Dendritic cell treated with granulocyte-macrophage colony-stimulating factor and Interleukin-4, amounts not matched to agents 40 ng/mL and 50 ng/mL, for 4 days (primary cell): ENCODE measurements at regions of chr3 and their contacts with region 1.

Region 1: DNA sequence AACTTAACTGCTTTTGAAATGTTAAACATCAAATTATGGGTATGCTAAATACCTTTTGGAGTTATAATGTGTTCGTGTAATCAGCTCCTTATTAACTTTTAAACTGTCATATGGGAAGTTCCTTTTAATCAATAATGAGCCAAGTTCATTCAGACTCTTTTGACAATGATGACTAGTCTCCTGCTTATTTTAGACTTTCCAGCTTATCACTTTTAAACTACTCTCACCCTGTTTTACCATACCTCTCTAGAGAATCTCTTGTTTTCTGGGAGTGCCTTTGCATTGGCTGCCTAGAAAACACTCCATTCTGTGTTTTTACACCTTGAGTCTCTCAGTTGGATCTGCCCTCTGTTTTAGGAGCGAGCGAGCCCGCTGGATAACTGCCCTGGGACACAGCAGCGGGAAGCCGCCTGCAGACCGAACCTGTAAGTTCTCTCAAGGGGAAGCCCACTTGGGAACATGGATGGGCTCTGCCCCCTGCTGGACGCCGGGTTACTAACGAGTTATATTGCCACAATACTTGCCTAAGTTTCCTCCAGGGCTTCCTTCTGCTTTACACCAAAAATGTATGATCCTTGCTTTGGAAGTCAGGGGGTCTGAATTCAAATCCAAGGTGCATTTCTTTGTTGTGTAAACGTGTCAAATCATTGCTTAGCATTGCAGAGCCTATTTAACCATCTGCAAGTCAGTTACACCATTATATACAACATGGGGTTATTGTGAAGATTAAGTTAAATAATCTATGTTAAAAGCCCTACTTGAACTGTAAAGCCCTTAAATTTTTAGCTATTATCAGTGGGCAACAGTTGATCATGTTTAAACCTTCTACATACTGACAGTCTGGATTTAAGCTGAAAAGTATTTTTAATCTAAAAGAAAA is 71.3 kb downstream of the DHX36 start:
- H3K4me3 Mint-ChIP-seq: no peak overlapping the region
- H3K27ac Mint-ChIP-seq: no peak overlapping the region
- H3K4me1 Mint-ChIP-seq: peaks cover 5% of the 10 kb centered on the region
- H3K27me3 Mint-ChIP-seq: no peaks in the 10 kb centered on the region

Region 2: GRCh38 chr3:154040286-154040685 is 212.7 kb before region 1 on chr3:
- intact Hi-C with region 1: loop called (anchors 2 kb)
- H3K4me3 Mint-ChIP-seq: no peak overlapping the region
- H3K27ac Mint-ChIP-seq: no peak overlapping the region
- H3K4me1 Mint-ChIP-seq: no peaks in the 10 kb centered on the region
- H3K27me3 Mint-ChIP-seq: no peaks in the 10 kb centered on the region

Region 3: GRCh38 chr3:154095832-154096421 is 157.1 kb before region 1 on chr3:
- intact Hi-C with region 1: loop called (anchors 2 kb)
- H3K4me3 Mint-ChIP-seq: no peak overlapping the region
- H3K27ac Mint-ChIP-seq: no peak overlapping the region
- H3K4me1 Mint-ChIP-seq: no peaks in the 10 kb centered on the region
- H3K27me3 Mint-ChIP-seq: no peaks in the 10 kb centered on the region

Region 4: GRCh38 chr3:155560594-155560993 is 1307.6 kb after region 1 on chr3:
- intact Hi-C with region 1: no loop called
- H3K4me3 Mint-ChIP-seq: no peak overlapping the region
- H3K27ac Mint-ChIP-seq: no peak overlapping the region
- H3K4me1 Mint-ChIP-seq: no peaks in the 10 kb centered on the region
- H3K27me3 Mint-ChIP-seq: no peaks in the 10 kb centered on the region